Activated CD4-positive, alpha-beta T cell treated with anti-CD3 and anti-CD28 coated beads for 36 hours (primary cell): ENCODE measurements at regions of chr5 and their contacts with region 1.

Region 1: GRCh38 chr5:141040771-141041426 is 10.3 kb upstream of the PCDHB1 start:
- DNase-seq: peak; percentile 91
- ATAC-seq: peak; percentile 72
- H3K4me3 Mint-ChIP-seq: no peak overlapping the region
- H3K27ac Mint-ChIP-seq: no peak overlapping the region
- H3K4me1 Mint-ChIP-seq: no peaks in the 10 kb centered on the region
- H3K27me3 Mint-ChIP-seq: peaks cover 17% of the 10 kb centered on the region

Region 2: GRCh38 chr5:140785905-140786686 is 254.8 kb before region 1 on chr5 and contains the start of gene PCDHA1:
- CTCF ChIA-PET with region 1: no interaction called
- POLR2A ChIA-PET with region 1: no interaction called
- intact Hi-C with region 1: loop called in 1 of 2 experiments (anchors 5 kb)
- DNase-seq: no peak
- ATAC-seq: no peak
- H3K4me3 Mint-ChIP-seq: no peak within 1 kb of the TSS
- H3K27ac Mint-ChIP-seq: no peak within 1 kb of the TSS
- H3K4me1 Mint-ChIP-seq: no peaks in the 10 kb centered on the region
- H3K27me3 Mint-ChIP-seq: peaks cover 33% of the 10 kb centered on the region
- total RNA-seq, gene PCDHA1: not detected

Region 3: DNA sequence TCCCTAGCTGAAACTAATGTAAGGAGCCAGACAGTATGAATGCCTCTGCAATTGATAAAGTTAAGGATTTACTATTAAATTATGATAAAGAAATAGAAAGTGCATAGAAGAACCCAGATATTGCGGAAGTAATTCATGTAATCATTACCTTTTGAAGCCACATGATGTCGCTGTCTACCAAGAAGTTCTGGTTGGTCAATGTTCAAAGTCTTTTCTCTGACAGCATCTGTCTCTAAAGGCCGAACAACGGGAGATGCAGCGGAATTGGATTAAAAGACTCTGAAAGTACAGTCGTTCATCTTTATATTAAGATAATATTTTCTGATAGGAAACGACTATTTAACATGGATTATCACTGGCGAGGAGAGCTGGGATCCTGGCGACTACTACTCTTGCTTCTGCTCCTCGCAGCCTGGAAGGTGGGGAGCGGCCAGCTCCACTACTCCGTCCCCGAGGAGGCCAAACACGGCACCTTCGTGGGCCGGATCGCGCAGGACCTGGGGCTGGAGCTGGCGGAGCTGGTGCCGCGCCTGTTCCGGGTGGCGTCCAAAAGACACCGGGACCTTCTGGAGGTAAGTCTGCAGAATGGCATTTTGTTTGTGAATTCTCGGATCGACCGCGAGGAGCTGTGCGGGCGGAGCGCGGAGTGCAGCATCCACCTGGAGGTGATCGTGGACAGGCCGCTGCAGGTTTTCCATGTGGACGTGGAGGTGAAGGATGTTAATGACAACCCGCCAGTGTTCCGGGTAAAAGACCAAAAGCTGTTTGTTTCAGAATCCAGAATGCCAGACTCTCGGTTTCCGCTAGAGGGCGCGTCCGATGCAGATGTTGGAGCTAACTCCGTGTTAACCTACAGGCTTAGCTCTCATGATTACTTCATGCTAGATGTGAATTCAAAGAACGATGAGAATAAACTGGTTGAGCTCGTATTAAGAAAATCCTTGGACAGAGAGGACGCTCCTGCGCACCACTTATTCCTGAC is 199.6 kb before region 1 on chr5 and contains the start of gene PCDHA8:
- CTCF ChIA-PET with region 1: interaction called, 3 read pairs
- POLR2A ChIA-PET with region 1: no interaction called
- intact Hi-C with region 1: loop called in 1 of 2 experiments (anchors 5 kb)
- DNase-seq: peak; percentile 49
- ATAC-seq: no peak
- H3K4me3 Mint-ChIP-seq: no peak within 1 kb of the TSS
- H3K27ac Mint-ChIP-seq: no peak within 1 kb of the TSS
- H3K4me1 Mint-ChIP-seq: no peaks in the 10 kb centered on the region
- H3K27me3 Mint-ChIP-seq: peaks cover 22% of the 10 kb centered on the region
- total RNA-seq, gene PCDHA8: not detected

Region 4: GRCh38 chr5:140868721-140869554 is 172.0 kb before region 1 on chr5 and contains the start of gene PCDHA11:
- CTCF ChIA-PET with region 1: interaction called, 4 read pairs
- POLR2A ChIA-PET with region 1: no interaction called
- intact Hi-C with region 1: loop called in 1 of 2 experiments (anchors 1 kb)
- DNase-seq: no peak
- ATAC-seq: no peak
- H3K4me3 Mint-ChIP-seq: no peak within 1 kb of the TSS
- H3K27ac Mint-ChIP-seq: no peak within 1 kb of the TSS
- H3K4me1 Mint-ChIP-seq: no peaks in the 10 kb centered on the region
- H3K27me3 Mint-ChIP-seq: peaks cover 18% of the 10 kb centered on the region
- total RNA-seq, gene PCDHA11: not detected

Region 5: DNA sequence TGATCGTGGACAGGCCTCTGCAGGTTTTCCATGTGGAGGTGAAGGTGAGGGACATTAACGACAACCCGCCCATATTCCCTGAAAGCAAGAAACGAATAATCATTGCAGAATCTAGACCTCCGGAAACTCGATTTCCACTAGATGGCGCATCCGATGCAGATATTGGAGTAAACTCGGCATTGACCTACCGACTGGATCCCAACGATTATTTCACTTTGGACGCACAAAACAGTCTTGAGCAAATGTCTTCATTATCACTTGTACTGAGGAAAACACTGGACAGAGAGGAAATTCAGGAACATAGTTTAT is 158.4 kb before region 1 on chr5:
- CTCF ChIA-PET with region 1: no interaction called
- POLR2A ChIA-PET with region 1: no interaction called
- intact Hi-C with region 1: loop called (anchors 1 to 2 kb)
- DNase-seq: no peak
- ATAC-seq: no peak
- H3K4me3 Mint-ChIP-seq: no peak overlapping the region
- H3K27ac Mint-ChIP-seq: no peak overlapping the region
- H3K4me1 Mint-ChIP-seq: no peaks in the 10 kb centered on the region
- H3K27me3 Mint-ChIP-seq: peaks cover 34% of the 10 kb centered on the region

Region 6: DNA sequence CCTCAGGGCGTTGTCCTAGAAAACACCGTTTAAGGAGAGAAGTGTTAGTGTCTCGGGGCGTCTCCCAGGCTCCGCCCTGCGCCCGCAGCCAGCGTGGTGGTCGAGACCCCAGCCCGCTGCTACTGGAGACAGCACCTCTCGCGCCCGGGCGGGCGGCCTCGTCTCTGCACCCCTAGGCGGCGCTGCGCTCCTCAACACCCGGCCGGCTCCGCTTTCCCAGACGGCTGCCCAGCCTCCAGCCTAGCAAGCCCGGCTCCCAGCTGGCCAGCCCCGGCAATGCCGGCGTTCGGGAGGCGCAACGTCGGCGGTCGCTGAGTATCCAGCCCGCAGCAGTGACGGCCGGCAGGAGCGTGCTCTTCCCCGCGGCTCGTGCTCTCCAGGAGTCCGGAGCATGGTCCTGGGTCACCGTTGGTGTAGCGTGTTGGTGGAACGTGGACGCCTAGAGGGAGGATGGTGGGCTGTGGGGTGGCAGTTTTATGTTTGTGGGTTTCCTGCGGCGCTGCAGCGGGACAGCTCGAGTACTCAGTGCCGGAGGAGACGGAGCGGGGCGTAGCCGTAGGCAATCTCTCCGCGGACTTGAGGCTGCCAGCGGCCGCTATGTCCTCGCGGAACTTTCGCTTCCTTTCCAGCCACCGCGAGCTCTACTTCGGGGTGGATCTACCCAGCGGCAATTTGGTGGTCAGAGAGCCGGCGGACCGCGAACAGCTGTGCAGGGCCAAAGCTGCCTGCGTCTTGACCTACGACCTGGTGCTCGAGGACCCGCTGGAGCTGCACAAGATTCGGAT is 114.3 kb before region 1 on chr5:
- CTCF ChIA-PET with region 1: no interaction called
- POLR2A ChIA-PET with region 1: no interaction called
- intact Hi-C with region 1: loop called in 1 of 2 experiments (anchors 1 kb)
- DNase-seq: peak; percentile 70
- ATAC-seq: peak; percentile 55
- H3K4me3 Mint-ChIP-seq: peak overlapping the region; percentile 40
- H3K27ac Mint-ChIP-seq: no peak overlapping the region
- H3K4me1 Mint-ChIP-seq: peaks cover 7% of the 10 kb centered on the region
- H3K27me3 Mint-ChIP-seq: peaks cover 51% of the 10 kb centered on the region